ENCODE measurements at regions of chr1 and their contacts with region 1.

Region 1: DNA sequence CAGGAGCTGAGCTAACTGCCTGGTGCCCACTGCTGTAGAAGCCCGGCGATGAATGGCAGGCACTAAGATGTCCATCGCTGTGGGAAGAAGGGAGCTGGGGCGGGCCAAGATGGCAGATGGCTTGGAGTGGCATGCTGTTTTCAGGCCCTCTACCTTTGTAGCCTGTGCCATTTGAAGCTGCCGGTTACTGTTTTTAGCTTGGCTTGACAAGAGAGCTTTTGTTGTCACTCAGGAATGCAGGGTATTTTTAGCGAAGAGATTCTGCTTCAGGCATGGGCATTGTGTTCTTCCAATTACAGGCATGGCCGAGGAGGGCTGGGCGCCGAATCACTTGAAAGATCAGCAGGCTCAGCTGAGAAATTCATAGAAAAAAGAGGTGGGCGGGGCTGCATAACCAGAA is 348.7 kb downstream of the RPS6KC1 start:
- DNase-seq: no peak
- H3K4me3 ChIP-seq: no peak overlapping the region
- CTCF ChIP-seq: no peak

Region 2: GRCh38 chr1:213303286-213303685 is 96.4 kb before region 1 on chr1:
- in situ Hi-C with region 1: no loop called
- DNase-seq: peak; percentile 36
- H3K4me3 ChIP-seq: no peak overlapping the region
- CTCF ChIP-seq: no peak

Region 3: GRCh38 chr1:213457097-213457680 is 57.5 kb after region 1 on chr1:
- in situ Hi-C with region 1: loop called (anchors 10 kb)
- DNase-seq: no peak
- H3K4me3 ChIP-seq: no peak overlapping the region
- CTCF ChIP-seq: no peak

Region 4: DNA sequence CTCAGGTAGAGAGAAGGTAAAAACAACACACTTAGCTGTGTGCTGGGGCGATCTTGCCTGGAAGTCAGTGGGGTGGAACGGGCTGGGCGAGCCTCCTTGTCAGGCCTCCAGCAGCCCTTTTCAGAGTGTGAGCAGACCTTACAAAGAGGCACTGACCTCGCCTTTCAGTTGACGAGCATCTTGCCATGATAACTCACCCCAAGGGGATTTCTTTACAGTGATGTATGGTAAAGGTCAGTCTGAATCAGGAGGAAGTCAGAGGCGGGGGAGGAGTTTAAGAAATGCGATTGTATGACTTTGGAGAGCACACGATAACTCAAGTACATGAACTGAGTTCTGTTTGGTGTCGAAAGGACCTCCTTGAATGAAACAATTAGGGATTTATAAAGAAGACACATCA is 261.6 kb after region 1 on chr1:
- in situ Hi-C with region 1: no loop called
- DNase-seq: no peak
- H3K4me3 ChIP-seq: no peak overlapping the region
- CTCF ChIP-seq: no peak